ENCODE measurements at regions of chr20 and their contacts with region 1.

Region 1: DNA sequence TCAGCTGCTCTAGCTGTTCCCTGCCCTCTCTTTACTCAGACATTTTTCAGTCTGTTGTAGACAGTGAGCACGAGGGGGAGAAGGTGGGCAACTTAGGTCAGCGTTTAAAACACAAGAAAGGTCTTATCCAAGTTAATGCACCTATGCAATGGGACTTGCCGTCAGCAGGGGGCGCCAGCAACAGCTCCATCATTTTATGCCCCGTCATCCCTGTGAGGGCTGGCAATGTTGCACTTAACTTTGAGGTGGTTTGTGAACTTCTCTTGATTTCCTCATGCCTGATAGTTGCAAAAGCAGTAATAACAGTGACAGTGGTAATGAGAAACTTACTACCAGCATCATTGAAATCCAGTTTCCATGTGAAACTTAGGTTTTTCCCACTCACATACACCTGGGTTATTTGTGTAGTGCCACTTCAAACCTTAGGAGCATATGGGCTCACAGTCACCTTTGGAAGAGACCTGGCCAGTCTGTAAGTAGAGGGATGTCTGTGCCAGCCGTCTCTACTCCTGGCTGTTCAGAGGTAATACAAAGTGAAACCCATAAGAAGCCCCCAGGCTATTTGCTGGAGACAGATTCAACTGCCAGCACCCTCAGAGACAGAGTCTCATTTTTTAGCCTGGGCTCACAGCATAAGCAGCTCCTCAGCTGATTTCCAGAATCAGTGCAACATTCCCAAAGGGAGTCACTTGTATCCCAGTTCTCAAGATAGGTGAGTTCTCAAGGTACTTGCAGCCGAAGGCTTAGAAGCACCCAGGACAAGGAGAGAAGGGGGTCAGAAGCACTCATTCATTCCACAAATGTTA is 44.8 kb upstream of the ID1 start:
- DNase-seq: peak; percentile 61 to 74
- ATAC-seq: peak; percentile 40

Region 2: GRCh38 chr20:31322504-31322903 is 237.8 kb before region 1 on chr20:
- intact Hi-C with region 1: no loop called
- DNase-seq: no peak
- ATAC-seq: no peak

Region 3: DNA sequence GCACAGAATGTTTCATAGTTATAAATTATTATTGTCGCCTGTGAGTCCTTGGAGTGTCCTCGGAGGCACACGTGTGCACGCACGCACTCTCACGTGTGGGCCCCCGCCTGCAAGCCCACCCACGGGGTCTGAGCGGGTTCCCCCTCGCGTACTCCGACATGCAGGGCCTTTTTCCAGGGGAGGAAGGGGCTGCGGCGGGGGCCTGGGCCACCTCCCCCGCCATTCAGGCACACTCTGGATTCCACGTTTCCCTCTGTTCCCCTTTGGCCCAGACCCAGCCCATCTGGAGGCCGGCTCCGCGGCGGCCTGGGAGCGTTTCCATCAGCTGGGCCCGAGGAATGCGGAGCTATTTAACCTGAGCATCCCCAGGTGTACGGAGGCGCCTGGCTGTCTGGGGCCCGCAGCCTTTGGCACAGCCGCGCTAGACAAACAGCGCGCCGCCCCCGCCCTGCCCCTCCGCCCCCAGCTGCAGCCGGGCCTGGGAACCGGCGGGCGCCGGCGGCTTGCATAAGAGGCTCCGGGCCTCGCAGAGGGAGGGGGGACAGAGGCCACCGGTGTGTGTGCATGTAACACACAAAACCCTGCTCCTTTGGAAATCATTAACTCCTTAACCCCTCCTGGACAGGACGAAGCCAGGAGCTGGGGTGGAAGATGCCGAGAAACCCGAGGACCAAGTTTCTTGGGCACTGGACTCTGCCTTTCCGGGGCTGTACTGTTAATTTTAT is 48.1 kb after region 1 on chr20:
- intact Hi-C with region 1: loop called (anchors 2 to 10 kb)
- DNase-seq: peak; percentile 89 to 91
- ATAC-seq: peak; percentile 43

Region 4: GRCh38 chr20:31617432-31618104 is 57.3 kb after region 1 on chr20:
- intact Hi-C with region 1: loop called (anchors 2 to 10 kb)
- DNase-seq: no peak
- ATAC-seq: no peak

Measured in left colon (tissue), 2 donors.